H1 (cell line): ENCODE measurements at regions of chr22 and their contacts with region 1.

Region 1: DNA sequence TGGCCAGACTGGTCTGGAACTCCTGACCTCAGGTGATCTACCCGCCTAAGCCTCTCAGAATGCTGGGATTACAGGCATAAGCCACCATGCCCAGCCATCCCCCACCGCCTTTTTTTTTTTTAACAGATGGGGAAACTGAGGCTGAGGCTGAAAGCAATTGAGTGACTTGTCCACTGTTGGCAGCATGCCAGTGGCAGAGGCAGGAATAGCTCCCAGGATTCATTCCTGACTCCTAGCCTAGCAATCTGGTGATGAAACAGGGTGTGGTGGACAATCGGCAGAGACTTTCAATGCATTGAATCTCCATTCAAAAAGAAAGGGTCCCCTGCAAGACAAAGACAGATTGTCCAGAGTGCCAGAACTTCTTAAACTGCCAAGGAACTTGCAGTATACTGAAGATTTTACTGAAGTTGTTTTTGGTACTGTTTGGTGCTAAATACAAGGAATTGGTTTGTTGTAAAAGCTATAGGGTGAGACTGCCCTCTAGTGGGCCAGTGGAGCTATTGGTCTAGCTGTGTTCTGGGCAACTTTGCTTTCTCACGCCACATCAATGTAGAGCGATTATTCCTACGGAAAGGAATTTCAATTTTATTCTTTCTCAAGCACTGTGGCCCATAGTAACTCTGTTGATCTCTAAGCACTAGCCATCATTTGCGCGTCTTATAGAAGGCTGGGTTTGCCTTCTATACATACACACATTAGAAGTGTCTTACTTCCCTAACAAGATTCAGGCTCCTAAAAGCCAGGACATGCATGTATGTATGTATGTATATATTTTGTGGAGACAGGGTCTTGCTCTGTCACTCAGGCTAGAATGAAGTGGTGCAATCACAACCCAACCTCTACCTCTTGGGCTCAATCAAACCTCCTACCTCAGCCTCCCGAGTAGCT is 21.0 kb downstream of the C22orf31 start:
- DNase-seq: no peak
- H3K4me3 ChIP-seq: no peak overlapping the region
- H3K27ac ChIP-seq: no peak overlapping the region
- H3K4me1 ChIP-seq: peaks cover 0 to 3% (median 0%) of the 10 kb centered on the region in 4 experiments; a peak in 3 of 7 replicates
- H3K27me3 ChIP-seq: no peaks in the 10 kb centered on the region
- CTCF ChIP-seq: peak; percentile 48 to 91 (median 88)
- EP300 ChIP-seq: no peak
- POLR2A ChIP-seq: no peak
- RAD21 ChIP-seq: peak; percentile 92 to 98

Region 2: DNA sequence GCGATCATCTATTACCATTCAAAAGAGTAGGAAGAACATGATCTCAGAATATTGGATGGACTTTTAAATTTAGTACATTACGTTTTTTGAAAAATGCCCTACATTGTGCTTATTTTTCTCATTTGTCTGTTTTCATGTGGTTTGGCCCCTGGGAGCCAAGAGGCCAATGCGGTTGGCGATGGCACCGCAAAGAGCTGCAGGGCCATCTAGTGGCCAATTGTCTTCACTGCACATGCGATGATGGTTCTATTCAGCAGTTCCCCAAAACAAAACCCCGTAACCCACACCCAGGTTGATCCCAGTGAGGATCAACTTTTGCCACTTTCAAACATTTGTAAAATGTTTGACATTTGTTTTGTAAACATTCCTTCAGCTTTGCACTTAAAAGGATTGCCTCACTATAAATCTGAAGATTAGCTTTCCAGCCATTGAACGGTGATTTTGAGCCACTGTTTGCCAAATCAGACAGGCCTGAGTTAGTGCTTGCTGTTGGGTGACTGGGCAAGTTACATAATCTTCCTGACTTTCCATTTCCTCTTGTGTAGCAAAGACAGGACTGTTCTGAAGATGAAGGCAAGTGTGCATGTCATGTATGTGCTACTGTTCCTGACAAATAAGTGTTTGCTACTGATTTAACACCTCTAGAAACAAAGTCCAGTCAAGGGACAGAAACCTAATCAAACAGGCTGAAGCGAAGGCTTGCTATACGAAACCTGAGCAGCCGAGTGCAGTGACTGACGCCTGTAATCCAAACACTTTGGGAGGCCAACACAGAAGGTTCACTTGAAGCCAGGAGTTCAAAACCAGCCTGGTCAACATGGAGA is 211.1 kb before region 1 on chr22:
- CTCF ChIA-PET with region 1: interaction called, 18 read pairs
- POLR2A ChIA-PET with region 1: no interaction called
- DNase-seq: peak; percentile 25 to 87
- H3K4me3 ChIP-seq: no peak overlapping the region
- H3K27ac ChIP-seq: no peak overlapping the region
- H3K4me1 ChIP-seq: no peaks in the 10 kb centered on the region; a peak in 1 of 7 replicates
- H3K27me3 ChIP-seq: no peaks in the 10 kb centered on the region
- CTCF ChIP-seq: peak; percentile 89 to 97 (median 93)
- EP300 ChIP-seq: no peak
- POLR2A ChIP-seq: no peak
- RAD21 ChIP-seq: peak; percentile 98 to 99

Region 3: DNA sequence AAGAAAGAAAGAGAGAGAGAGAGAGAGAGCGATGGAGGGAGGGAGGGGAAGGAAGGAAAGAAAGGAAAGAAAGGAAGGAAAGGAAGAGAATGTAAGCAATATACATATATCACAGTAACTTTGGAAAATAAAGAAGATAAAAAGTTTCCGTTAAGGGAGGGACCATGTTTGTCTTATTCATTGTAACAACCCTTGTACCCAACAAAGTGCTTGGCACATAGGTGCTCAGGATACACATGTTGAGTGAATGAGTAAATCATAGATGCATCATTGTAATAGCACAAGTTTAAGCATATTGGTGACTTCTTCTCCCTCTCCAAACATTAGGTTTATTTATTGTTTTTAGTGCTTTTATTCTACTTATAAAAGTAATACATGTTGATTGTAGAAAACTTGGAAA is 197.0 kb before region 1 on chr22:
- CTCF ChIA-PET with region 1: interaction called, 15 read pairs
- POLR2A ChIA-PET with region 1: no interaction called
- DNase-seq: no peak
- H3K4me3 ChIP-seq: no peak overlapping the region
- H3K27ac ChIP-seq: no peak overlapping the region
- H3K4me1 ChIP-seq: no peaks in the 10 kb centered on the region
- H3K27me3 ChIP-seq: no peaks in the 10 kb centered on the region; a peak in 1 of 7 replicates
- CTCF ChIP-seq: no peak
- EP300 ChIP-seq: no peak
- POLR2A ChIP-seq: no peak
- RAD21 ChIP-seq: no peak

Region 4: DNA sequence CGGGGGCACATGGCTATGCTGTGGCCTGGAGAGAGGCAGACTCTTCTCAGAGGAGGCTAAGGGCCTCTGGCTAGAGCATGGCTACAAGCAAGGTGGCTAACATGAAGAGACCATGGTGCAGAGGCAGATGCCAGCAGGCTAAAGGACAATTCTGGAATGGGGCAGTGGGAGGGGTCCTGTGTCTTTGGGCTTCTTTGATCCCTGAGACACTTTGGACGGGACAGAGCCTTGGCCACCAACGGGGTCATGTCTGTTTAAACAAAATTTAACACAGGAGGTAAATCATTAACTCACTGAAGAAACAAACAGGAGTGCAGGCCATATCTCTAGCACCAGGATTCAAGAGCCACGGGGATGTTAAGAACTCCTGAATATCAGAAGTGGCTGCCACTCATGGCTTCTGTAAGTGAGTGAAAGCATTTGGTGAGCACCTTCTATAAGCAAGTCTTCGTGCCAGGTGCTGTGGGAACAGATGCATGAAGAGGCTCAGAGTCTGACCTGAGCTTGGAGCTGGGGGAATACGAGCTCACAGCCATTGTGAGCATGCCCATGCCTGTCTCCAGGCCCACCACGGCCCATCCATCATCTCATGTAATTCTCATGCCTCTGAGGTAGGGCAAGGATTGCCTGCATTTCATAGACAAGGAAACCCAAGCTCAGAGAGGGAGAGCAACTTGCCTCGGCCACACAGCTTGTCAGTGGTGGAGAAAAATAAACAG is 175.6 kb before region 1 on chr22:
- CTCF ChIA-PET with region 1: interaction called, 67 read pairs
- POLR2A ChIA-PET with region 1: interaction called, 3 read pairs
- DNase-seq: no peak
- H3K4me3 ChIP-seq: no peak overlapping the region
- H3K27ac ChIP-seq: no peak overlapping the region
- H3K4me1 ChIP-seq: no peaks in the 10 kb centered on the region
- H3K27me3 ChIP-seq: no peaks in the 10 kb centered on the region
- CTCF ChIP-seq: no peak
- EP300 ChIP-seq: no peak
- POLR2A ChIP-seq: no peak
- RAD21 ChIP-seq: no peak

Region 5: GRCh38 chr22:28904211-28904896 is 136.3 kb before region 1 on chr22:
- CTCF ChIA-PET with region 1: interaction called, 11 read pairs
- POLR2A ChIA-PET with region 1: no interaction called
- DNase-seq: no peak
- H3K4me3 ChIP-seq: no peak overlapping the region
- H3K27ac ChIP-seq: no peak overlapping the region
- H3K4me1 ChIP-seq: peaks cover 9 to 18% (median 14%) of the 10 kb centered on the region in 4 experiments
- H3K27me3 ChIP-seq: no peaks in the 10 kb centered on the region
- CTCF ChIP-seq: no peak
- EP300 ChIP-seq: no peak
- POLR2A ChIP-seq: no peak
- RAD21 ChIP-seq: no peak

Region 6: DNA sequence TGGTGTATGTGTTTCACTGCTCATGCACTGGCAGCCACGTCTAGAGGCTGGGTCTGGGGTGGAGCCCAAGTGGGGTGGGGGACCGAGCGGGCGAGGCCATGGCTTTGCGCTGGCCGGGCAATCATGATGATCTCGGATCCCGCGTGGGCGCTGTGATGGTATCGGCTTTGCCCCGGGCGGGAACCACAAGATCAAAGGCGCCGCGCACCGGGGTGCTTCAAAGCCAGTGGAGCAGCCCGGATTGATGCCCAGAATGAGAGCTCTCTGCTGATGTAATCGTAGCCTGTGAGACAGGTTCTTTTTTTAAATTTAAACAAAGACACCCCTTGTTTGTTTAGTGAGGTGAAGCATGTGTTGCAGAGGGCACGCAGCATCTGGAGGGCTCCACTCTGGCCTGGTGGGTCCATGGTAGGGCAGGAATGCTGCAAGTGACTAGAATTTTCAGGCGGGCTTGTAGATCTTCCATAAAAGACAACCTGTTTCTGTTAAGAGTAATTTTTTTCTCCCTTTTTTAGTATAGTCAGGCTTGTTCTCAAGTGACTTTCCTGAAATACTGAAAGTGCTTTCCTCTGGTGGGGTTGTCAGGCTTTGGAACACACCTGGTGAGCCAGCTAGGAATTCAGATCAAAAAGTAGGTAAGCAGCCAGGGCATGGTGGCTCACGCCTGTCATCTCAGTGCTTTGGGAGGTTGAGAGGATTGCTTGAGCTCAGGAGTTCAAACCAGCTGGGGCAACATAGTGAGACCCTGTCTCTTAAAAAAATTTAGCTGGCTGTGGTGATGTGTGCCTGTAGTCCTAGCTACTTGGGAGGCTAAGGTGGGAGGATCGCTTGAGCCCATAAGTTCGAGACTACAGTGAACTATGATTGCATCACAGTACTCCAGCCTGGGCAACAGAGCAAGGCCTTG is 116.6 kb before region 1 on chr22:
- CTCF ChIA-PET with region 1: interaction called, 37 read pairs
- POLR2A ChIA-PET with region 1: no interaction called
- DNase-seq: no peak
- H3K4me3 ChIP-seq: no peak overlapping the region
- H3K27ac ChIP-seq: no peak overlapping the region
- H3K4me1 ChIP-seq: peaks cover 2 to 17% (median 13%) of the 10 kb centered on the region in 4 experiments; a peak in 4 of 7 replicates
- H3K27me3 ChIP-seq: no peaks in the 10 kb centered on the region
- CTCF ChIP-seq: no peak
- EP300 ChIP-seq: no peak
- POLR2A ChIP-seq: no peak
- RAD21 ChIP-seq: no peak

Region 7: DNA sequence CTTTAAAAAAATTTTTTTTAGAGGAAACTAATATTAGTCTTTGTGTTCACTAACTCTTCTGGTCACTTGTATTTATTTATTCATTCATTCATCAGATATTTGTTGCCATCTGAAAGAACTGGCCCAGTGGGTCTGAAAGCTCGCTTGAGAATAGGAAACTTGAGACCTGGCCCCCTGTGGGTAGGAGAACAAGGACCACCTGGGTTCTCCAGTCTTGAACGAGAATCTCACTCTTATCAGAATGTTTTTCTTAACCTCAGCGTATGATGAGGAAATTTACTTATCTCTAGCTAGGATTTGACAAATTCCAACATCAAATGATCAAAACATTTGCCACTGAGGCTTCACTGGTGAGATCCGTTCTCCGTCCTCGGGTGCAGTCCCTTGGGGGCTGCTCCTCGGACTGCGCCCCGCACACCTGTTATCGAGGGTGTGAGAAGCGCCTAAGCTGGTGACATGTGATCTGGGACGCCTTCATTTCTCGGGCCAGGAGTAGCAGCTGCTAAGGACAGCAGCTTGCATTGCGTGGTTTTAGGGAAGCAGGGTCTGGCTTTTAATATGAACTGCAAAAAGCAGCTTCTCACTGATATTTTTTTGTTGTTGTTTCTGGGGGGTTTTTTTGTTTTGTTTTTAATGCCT is 14.7 kb after region 1 on chr22:
- CTCF ChIA-PET with region 1: interaction called, 22 read pairs
- POLR2A ChIA-PET with region 1: interaction called, 6 read pairs
- DNase-seq: no peak
- H3K4me3 ChIP-seq: peak overlapping the region in 3 of 4 experiments; percentile 20 to 38 (median 34); a peak in 4 of 8 replicates
- H3K27ac ChIP-seq: no peak overlapping the region
- H3K4me1 ChIP-seq: peaks cover 0 to 27% (median 18%) of the 10 kb centered on the region in 4 experiments; a peak in 6 of 7 replicates
- H3K27me3 ChIP-seq: no peaks in the 10 kb centered on the region
- CTCF ChIP-seq: no peak
- EP300 ChIP-seq: no peak
- POLR2A ChIP-seq: no peak
- RAD21 ChIP-seq: no peak

Region 8: DNA sequence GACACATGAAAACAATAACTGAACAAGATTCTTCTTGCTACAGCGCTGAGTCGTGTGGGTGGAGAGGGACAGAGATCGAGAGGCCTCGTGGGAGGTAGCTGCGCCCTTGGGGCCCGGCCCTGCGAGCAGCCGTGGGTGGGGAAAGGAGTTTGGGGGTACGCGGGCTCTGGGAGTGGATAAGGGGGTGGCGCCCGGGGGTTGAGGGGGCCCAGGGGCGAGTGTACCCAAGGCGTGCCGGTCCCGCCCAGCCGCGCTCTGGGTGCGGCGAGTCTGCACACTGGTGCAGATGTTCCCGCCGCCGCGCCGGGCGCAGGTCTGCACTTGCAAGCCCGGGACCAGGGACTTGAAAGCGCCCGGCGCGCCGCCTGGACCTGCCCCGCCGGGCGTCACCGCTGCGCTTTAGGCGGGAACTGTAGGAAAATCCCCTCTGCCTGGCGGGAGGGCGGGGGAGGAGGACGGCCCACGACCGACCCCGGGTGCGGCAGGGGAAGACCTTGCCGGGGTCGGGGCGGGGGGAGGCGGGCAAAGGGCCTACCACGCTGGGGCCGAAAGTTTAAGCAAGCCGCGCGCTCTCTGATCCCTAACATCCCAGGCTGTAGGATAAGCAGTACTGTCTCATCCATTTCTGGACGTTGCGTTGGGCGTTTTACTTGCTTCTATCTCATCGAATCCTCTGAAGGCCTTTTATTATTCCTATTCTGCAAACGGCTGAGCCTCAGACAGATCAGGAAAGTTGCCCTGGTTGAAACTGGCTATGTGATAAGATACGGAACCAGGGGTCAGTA is 30.8 kb after region 1 on chr22:
- CTCF ChIA-PET with region 1: no interaction called
- POLR2A ChIA-PET with region 1: no interaction called
- DNase-seq: peak; percentile 43 to 78
- H3K4me3 ChIP-seq: peak overlapping the region; percentile 17 to 61 (median 28); a peak in 7 of 8 replicates
- H3K27ac ChIP-seq: no peak overlapping the region
- H3K4me1 ChIP-seq: peaks cover 3 to 9% (median 7%) of the 10 kb centered on the region in 4 experiments
- H3K27me3 ChIP-seq: peaks cover 9 to 51% (median 48%) of the 10 kb centered on the region in 4 experiments
- CTCF ChIP-seq: no peak
- EP300 ChIP-seq: no peak
- POLR2A ChIP-seq: no peak
- RAD21 ChIP-seq: no peak; a peak in 1 of 4 replicates

Region 9: GRCh38 chr22:29096736-29097669 is 56.4 kb after region 1 on chr22:
- CTCF ChIA-PET with region 1: no interaction called
- POLR2A ChIA-PET with region 1: no interaction called
- DNase-seq: no peak
- H3K4me3 ChIP-seq: no peak overlapping the region
- H3K27ac ChIP-seq: no peak overlapping the region
- H3K4me1 ChIP-seq: peaks cover 0 to 7% (median 5%) of the 10 kb centered on the region in 4 experiments; a peak in 3 of 7 replicates
- H3K27me3 ChIP-seq: no peaks in the 10 kb centered on the region
- CTCF ChIP-seq: no peak
- EP300 ChIP-seq: no peak
- POLR2A ChIP-seq: no peak
- RAD21 ChIP-seq: no peak